Cardiac septum (tissue), 1 donor: ENCODE measurements at regions of chr11 and their contacts with region 1.

Region 1: DNA sequence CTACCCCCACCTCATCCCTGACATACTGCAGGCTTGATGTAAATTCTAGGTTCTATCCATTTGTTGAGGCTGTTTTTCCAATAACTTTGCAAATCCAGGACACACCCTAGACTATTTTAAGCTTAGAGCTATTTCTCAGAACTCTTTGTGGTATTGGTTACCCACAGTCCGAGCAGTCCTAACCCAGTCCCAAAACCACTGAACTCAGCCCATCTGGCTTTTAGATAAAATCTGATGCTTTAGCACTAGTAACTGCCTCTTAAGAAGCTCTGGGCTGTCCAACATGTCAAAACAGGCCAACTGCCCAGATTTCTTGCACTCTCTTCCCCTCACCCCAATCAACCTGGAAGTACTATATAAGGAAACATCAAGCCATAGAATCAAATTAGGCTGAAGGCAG is 344.4 kb upstream of the CADM1 start:
- DNase-seq: no peak

Region 2: DNA sequence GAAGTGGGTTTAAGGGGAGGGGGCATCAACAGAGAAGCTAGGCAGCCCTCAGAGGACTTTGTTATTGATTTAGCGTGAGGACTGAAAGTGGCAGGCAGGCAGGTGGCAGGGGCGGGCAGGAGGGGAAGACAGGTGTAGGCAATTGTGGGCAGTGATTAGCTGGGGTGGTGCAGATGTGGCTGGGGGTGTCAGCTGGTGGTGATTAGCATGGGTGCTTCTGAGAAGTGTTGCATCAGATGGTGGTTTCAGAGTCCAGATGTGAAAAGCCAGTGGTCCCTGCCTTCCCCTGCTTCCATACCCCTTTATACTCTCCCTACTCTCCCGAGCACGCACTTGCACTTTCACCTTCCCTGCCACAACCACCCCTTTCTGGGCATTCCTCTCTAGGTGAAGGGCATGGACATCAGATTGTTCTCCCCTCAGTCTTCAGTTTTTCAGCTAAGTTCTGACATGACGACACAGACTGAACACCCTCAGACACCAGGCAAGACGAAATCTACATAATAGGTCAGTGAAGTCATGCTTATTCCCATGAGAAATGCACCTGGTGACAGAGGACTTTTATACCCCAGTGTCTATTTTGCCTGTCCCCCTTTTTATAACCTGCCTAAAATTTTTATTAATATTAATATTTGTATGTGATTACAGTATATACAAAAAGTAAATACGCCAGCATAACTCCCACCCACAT is 91.3 kb after region 1 on chr11:
- intact Hi-C with region 1: loop called (anchors 5 kb)
- DNase-seq: no peak